Heart left ventricle (tissue), 16 donors: ENCODE measurements at regions of chr10 and their contacts with region 1.

Region 1: DNA sequence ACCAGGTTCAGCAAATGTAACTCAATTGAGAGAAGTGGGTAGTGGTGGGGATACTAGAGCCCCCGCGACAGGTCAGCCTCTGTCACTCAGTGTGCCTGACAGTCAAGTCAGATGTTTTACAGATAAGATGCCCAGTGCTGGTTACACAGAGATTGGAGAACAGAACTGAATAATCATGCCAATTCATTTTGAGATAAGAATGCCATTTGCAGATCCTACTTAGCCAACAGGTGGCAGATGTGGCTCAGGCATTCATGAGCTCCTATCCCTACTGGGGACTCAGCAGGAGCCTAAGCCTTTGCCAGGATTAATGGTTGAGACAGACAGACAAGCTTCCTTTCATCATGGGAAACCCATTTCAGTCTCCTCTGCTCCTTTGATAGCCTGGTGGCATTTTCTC is 137.8 kb downstream of the MAPK8 start:
- DNase-seq: peak in 1 of 5 donors; percentile 32
- ATAC-seq: peak in 1 of 4 donors; percentile 31
- H3K4me3 ChIP-seq: no peak overlapping the region
- H3K27ac ChIP-seq: no peak overlapping the region
- H3K4me1 ChIP-seq: no peaks in the 10 kb centered on the region
- H3K27me3 ChIP-seq: no peaks in the 10 kb centered on the region
- CTCF ChIP-seq: peak in 9 of 12 donors; percentile 7 to 39 (median 15)
- POLR2A ChIP-seq: no peak

Region 2: DNA sequence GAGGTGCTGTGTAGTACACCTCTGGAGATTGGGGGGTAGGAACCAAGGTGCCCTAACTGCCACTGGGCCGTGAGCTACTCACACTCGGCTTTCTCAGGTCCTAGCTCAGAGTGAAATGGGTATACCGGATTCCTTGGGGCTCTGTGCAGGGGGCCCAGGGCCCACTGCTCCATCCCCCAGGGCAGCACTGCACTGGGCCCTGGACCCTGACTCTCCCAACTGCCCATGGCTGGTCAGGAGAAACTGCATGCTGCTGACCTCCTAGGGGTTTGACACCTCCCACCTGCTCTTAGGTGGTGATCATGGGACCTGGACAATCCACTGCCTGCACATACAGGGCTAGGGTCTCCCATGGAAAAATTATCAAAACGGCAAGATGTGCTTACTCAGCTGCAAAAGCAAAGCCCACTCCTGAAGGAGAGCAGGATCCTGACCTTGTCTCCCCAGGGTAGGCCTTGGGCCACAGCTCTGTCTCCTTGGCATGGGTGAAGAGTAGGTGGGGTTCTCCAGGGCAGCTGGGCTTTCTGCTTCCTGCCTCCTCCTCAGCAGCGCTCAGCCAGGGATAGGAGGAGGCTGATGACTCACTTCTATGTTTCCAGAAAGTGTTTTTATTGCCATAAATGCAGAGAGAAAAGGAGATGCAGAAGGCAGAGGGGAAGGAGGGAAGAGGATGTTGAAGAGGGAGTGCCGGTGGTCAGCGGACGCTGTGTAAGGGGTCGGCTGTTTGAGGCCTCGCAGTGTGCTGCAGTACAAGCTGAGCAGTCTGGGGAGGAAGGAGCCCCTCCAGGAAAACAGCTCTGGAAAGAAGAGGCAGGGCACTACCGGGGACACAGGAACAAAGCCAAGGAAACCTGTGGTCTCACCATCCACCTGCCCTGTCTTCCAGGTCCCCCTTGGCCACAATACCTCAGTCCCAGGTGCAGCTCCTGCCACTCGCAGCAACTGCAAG is 52.8 kb after region 1 on chr10:
- intact Hi-C with region 1: loop called in 1 of 10 experiments (anchors 10 kb)
- DNase-seq: peak in 3 of 5 donors; percentile 32 to 62 (median 49)
- ATAC-seq: peak in 3 of 4 donors; percentile 70 to 87 (median 73)
- H3K4me3 ChIP-seq: no peak overlapping the region
- H3K27ac ChIP-seq: peak overlapping the region in 2 of 12 donors; percentile 5 to 27
- H3K4me1 ChIP-seq: peaks cover 0 to 22% (median 2%) of the 10 kb centered on the region in 12 donors
- H3K27me3 ChIP-seq: no peaks in the 10 kb centered on the region
- CTCF ChIP-seq: no peak
- POLR2A ChIP-seq: no peak